ENCODE measurements at regions of chr19 and their contacts with region 1.

Region 1: DNA sequence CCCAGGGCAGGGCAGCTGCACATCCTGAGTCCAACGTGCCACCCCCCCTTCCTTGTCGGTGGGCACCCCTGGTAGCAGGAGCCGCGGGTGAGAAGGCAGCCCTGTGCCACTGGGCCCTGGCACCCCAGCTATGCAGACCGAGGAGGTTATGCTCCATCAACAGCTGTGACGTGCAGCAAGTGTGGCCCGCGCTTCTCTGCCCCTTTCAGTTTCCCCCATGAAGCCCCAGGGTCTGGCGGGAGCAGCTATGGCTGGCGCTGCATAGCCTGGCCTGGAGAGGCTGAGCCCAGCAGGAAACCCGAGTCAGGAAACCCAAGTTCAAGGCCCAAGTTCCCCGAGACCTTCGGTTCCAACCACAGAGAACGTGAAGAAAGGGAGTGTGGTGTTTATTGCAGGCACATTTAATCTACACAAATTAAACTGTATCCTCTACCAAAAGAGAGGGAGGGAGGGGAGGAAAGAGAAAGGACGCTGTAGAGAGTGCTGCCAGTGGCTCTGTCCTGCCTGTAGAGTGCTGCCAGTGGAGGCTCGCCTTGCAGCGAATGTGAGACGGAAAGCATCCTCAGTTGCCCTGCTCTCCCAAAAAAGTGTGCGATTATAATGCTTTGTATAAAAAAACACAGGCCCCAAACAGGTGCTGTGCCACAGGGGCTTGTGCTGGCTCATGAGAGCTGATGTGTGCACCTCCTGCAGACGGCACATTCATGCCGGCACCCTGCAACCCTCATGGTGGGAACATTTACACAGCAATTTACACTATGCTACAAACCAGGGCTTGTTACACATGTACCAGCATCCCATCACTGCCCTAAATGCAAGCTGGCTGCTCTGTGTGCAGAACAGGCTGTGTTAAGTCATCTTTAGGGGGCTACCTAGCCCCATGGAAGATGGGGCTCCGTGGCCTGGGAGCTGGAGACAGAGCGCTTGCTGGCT is 16.3 kb downstream of the POP4 start:
- DNase-seq: peak; percentile 64
- ATAC-seq: peak; percentile 57
- H3K4me3 Mint-ChIP-seq: peak overlapping the region; percentile 20
- H3K27ac Mint-ChIP-seq: peak overlapping the region; percentile 83
- H3K4me1 Mint-ChIP-seq: peaks cover 51% of the 10 kb centered on the region
- H3K27me3 Mint-ChIP-seq: no peaks in the 10 kb centered on the region
- CTCF ChIP-seq: no peak

Region 2: GRCh38 chr19:29492769-29493168 is 129.6 kb before region 1 on chr19:
- CTCF ChIA-PET with region 1: no interaction called
- POLR2A ChIA-PET with region 1: no interaction called
- intact Hi-C with region 1: no loop called
- DNase-seq: no peak
- ATAC-seq: no peak
- H3K4me3 Mint-ChIP-seq: no peak overlapping the region
- H3K27ac Mint-ChIP-seq: no peak overlapping the region
- H3K4me1 Mint-ChIP-seq: no peaks in the 10 kb centered on the region
- H3K27me3 Mint-ChIP-seq: peaks cover 24% of the 10 kb centered on the region
- CTCF ChIP-seq: no peak

Region 3: DNA sequence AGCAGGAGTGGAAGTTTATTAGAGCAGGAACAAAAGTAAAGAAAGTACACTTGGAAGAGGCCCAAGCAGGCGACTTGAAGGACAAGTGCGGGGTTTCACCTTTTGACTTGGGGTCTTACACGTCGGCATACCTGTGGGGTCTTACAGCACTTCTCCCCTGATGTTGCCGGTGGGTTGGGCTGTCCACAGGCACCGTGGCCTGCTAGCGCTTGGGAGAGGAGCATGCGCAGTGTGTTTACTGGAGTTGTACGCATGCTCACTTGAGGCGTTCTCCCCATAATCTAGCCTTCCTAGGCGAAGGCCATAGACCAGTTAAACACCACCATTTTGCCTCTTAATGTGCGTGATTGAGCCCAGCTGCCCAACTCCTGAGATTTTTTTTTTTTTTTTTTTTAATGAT is 17.8 kb after region 1 on chr19:
- CTCF ChIA-PET with region 1: no interaction called
- POLR2A ChIA-PET with region 1: no interaction called
- intact Hi-C with region 1: no loop called
- DNase-seq: no peak
- ATAC-seq: no peak
- H3K4me3 Mint-ChIP-seq: no peak overlapping the region
- H3K27ac Mint-ChIP-seq: no peak overlapping the region
- H3K4me1 Mint-ChIP-seq: peaks cover 3% of the 10 kb centered on the region
- H3K27me3 Mint-ChIP-seq: no peaks in the 10 kb centered on the region
- CTCF ChIP-seq: no peak

Region 4: DNA sequence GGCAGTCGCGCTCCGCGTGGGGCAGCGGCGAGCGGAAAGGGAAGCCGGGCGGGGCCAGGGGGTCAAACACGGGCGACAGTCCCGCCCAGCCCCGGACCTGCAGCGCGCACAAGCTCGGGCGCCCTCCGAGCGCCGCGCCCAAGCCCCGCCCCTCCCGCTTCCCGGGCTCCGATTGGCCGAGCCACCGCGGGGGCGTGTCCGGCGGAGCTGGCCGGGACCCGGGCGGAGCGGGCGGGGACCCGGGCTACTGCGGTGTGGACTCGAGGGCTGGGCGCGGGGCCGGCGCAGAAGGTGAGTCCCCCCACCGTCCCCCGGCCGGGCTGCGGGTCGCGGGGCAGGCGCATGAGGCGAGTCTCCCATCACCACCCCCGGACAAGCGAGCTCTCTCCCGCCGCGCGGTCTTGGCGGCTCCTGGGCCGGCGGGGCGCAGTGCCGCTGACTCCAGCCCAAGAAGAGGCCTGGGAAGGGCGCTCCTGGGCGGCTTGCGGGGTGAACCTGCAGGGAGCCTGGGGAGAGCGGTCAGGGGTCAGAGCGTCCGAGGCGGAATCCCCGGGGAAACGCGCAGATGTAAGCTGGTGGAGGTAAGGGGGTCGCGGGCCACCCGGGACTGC is 42.9 kb after region 1 on chr19 and contains the start of gene PLEKHF1:
- CTCF ChIA-PET with region 1: interaction called, 25 read pairs
- POLR2A ChIA-PET with region 1: interaction called, 13 read pairs
- intact Hi-C with region 1: loop called (anchors 5 kb)
- DNase-seq: peak; percentile 87
- ATAC-seq: peak; percentile 79
- H3K4me3 Mint-ChIP-seq: peak within 1 kb of the TSS; percentile 88
- H3K27ac Mint-ChIP-seq: peak within 1 kb of the TSS; percentile 90
- H3K4me1 Mint-ChIP-seq: peaks cover 66% of the 10 kb centered on the region
- H3K27me3 Mint-ChIP-seq: no peaks in the 10 kb centered on the region
- CTCF ChIP-seq: no peak
- total RNA-seq, gene PLEKHF1: 30.4 to 31.7 TPM

Region 5: DNA sequence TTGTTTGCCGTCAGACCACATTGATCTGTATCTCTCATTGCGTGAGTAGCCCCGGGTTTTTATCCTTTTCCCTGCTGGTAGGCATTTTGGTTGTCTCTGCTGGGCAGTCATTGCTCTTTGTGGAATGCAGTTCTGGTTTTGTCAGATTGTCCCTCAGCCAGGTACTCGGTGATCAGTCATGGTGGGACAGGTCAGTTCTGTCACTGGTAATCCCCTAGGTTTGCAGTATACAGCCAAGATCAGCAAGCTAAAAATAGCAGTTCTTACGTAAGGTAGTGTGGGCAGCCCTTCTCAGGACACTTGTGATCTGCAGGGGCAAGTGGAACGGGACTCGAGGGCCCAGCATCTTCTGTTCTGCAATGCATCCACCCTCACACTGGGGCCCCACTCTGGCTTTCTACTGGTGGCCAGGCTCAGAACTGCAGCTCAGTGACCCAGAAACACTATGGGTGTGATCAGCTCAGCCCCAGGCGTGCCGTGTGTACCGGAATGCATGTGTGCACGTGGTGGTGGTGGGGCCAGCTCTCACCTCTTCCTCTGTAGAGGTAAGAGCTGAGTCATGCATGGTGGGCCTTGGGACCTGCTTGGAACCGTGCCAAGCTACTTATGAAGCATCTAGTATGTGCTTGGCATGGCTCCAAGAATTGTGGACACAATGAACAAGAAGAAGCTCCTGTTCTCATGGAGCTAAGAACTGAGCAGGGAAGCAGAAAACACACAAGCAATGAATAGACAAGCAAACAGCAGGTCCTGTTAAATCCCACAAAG is 49.2 kb after region 1 on chr19:
- CTCF ChIA-PET with region 1: interaction called, 25 read pairs
- POLR2A ChIA-PET with region 1: interaction called, 28 read pairs
- intact Hi-C with region 1: loop called (anchors 5 kb)
- DNase-seq: peak; percentile 96
- ATAC-seq: peak; percentile 66
- H3K4me3 Mint-ChIP-seq: peak overlapping the region; percentile 52
- H3K27ac Mint-ChIP-seq: peak overlapping the region; percentile 90
- H3K4me1 Mint-ChIP-seq: peaks cover 89% of the 10 kb centered on the region
- H3K27me3 Mint-ChIP-seq: no peaks in the 10 kb centered on the region
- CTCF ChIP-seq: peak; percentile 77

Region 6: GRCh38 chr19:29745253-29745652 is 122.8 kb after region 1 on chr19:
- CTCF ChIA-PET with region 1: no interaction called
- POLR2A ChIA-PET with region 1: no interaction called
- intact Hi-C with region 1: no loop called
- DNase-seq: no peak
- ATAC-seq: no peak
- H3K4me3 Mint-ChIP-seq: no peak overlapping the region
- H3K27ac Mint-ChIP-seq: no peak overlapping the region
- H3K4me1 Mint-ChIP-seq: no peaks in the 10 kb centered on the region
- H3K27me3 Mint-ChIP-seq: no peaks in the 10 kb centered on the region
- CTCF ChIP-seq: no peak